ENCODE measurements at regions of chr3 and their contacts with region 1.

Region 1: DNA sequence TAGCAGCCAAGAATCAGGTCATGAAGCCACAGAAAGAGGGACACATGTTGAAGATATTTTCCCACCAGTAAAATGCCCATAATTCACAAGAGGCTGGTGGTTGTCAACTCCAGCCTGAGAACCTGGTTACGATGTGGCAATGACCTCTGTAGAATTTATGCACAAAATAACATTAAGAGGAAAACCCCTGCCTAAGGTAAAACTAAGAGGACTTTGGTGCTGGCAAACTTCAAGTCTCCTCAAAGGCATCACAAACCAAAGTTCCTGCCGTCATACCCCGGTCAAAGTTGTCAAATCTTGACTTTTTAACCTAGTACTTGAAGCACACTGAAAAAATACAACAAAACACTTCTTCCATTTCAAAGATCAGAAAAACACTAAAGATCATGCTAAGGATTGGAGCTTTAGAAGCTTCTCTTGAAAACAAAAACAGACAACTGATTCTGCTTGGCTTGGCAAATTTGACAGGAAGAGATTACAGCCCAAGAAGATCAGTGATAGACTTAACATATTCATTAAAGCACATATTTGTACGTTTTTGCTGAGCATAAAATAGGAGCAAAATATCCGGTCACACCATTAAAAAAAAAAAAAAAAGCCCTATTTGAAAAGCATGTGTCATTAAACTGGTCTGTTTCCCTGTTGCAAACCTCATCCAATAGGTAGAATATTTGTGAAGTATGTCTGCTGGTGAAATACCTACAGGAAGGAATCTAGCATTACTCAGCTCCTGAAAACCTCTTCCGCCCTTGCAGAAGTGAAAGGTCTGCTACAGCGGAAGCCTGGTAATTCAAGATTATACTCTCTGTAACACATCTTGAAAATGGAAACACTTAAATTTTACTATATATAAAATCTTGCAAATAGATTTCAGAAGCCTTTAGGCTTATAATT is 22.8 kb downstream of the EIF4E3 start:
- DNase-seq: peak in 2 of 5 donors; percentile 15 to 39
- H3K4me3 ChIP-seq: no peak overlapping the region
- H3K4me3 Mint-ChIP-seq: peak overlapping the region in 6 of 7 donors; percentile 4 to 78 (median 60)
- H3K27ac ChIP-seq: no peak overlapping the region
- H3K27ac Mint-ChIP-seq: peak overlapping the region; percentile 56 to 92 (median 84)
- H3K4me1 ChIP-seq: peaks cover 41% of the 10 kb centered on the region
- H3K4me1 Mint-ChIP-seq: peaks cover 65 to 93% (median 83%) of the 10 kb centered on the region in 3 donors
- H3K27me3 ChIP-seq: no peaks in the 10 kb centered on the region
- H3K27me3 Mint-ChIP-seq: no peaks in the 10 kb centered on the region

Region 2: GRCh38 chr3:71723452-71724170 is 21.2 kb after region 1 on chr3:
- CTCF ChIA-PET with region 1: no interaction called
- POLR2A ChIA-PET with region 1: interaction called, 11 read pairs
- DNase-seq: peak; percentile 18 to 73 (median 64)
- H3K4me3 ChIP-seq: peak overlapping the region; percentile 55
- H3K4me3 Mint-ChIP-seq: peak overlapping the region; percentile 90 to 98 (median 95)
- H3K27ac ChIP-seq: peak overlapping the region; percentile 33
- H3K27ac Mint-ChIP-seq: peak overlapping the region; percentile 90 to 99 (median 93)
- H3K4me1 ChIP-seq: peaks cover 66% of the 10 kb centered on the region
- H3K4me1 Mint-ChIP-seq: peaks cover 72 to 81% (median 76%) of the 10 kb centered on the region in 3 donors
- H3K27me3 ChIP-seq: no peaks in the 10 kb centered on the region
- H3K27me3 Mint-ChIP-seq: peaks cover 0 to 1% of the 10 kb centered on the region in 2 donors

Region 3: GRCh38 chr3:71831599-71831998 is 129.2 kb after region 1 on chr3:
- CTCF ChIA-PET with region 1: no interaction called
- POLR2A ChIA-PET with region 1: no interaction called
- DNase-seq: no peak
- H3K4me3 ChIP-seq: no peak overlapping the region
- H3K4me3 Mint-ChIP-seq: no peak overlapping the region
- H3K27ac ChIP-seq: no peak overlapping the region
- H3K27ac Mint-ChIP-seq: no peak overlapping the region
- H3K4me1 ChIP-seq: no peaks in the 10 kb centered on the region
- H3K4me1 Mint-ChIP-seq: no peaks in the 10 kb centered on the region
- H3K27me3 ChIP-seq: no peaks in the 10 kb centered on the region
- H3K27me3 Mint-ChIP-seq: peaks cover 0 to 9% of the 10 kb centered on the region in 2 donors

Region 4: GRCh38 chr3:71905426-71905825 is 203.0 kb after region 1 on chr3:
- CTCF ChIA-PET with region 1: no interaction called
- POLR2A ChIA-PET with region 1: no interaction called
- DNase-seq: no peak
- H3K4me3 ChIP-seq: no peak overlapping the region
- H3K4me3 Mint-ChIP-seq: no peak overlapping the region
- H3K27ac ChIP-seq: no peak overlapping the region
- H3K27ac Mint-ChIP-seq: no peak overlapping the region
- H3K4me1 ChIP-seq: no peaks in the 10 kb centered on the region
- H3K4me1 Mint-ChIP-seq: peaks cover 0 to 5% (median 0%) of the 10 kb centered on the region in 3 donors
- H3K27me3 ChIP-seq: no peaks in the 10 kb centered on the region
- H3K27me3 Mint-ChIP-seq: peaks cover 3 to 45% of the 10 kb centered on the region in 2 donors